ENCODE measurements at regions of chr17 and their contacts with region 1.

Region 1: DNA sequence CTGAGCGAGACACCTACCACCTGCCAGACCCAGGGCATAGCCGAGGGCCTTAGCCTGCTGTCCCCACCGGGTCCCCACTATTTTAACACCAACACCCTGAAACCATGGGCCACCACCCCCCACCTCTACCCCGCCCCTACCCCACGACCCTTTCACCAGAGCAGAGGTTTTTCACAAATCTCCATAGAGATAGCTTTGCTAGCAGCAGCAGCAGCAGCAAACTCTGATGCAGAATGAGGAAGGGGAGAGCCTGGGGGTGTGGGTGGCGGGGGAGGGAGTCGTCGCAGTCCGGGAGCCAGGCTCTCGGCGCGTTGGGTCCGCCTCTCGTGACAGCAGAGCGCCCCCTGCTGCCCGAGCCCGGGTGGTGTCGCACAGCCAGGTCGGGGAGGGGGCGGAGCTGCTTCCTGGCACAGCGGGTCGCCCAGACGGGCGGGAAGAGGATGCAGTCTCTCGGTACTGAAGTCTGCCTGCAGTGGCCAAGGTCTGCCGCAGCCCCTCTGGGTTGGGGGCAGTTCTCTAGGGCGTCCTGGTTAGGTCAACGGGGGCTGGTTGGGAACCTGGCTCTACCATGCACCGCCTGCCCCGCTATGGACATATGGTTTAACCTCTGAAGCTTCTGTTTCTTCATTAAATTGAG is 38.1 kb upstream of the CCDC182 start:
- DNase-seq: peak; percentile 80
- ATAC-seq: peak; percentile 95
- H3K4me3 Mint-ChIP-seq: no peak overlapping the region
- H3K27ac Mint-ChIP-seq: no peak overlapping the region
- H3K4me1 Mint-ChIP-seq: no peaks in the 10 kb centered on the region
- H3K27me3 Mint-ChIP-seq: peaks cover 38% of the 10 kb centered on the region

Region 2: DNA sequence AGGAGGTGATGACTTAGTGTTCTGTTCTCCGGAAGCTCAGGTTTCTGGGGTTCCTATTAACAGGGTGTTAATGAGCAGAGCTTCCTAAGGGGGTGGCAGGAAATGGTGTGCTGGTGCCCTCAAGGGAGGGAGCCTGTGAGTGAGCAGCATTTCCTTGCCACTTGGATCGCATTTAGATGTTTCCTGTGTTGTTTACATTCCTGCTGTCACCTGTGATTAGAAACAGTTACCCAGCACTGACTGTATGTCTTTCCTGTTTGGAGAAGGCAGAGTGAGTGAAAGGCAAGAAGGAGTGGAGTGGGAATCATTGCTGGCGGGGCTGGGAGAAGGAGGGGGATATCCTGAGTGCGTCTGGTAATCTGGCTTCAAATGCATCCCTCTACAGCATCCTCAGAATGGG is 252.7 kb before region 1 on chr17:
- CTCF ChIA-PET with region 1: no interaction called
- DNase-seq: no peak
- ATAC-seq: peak; percentile 20
- H3K4me3 Mint-ChIP-seq: no peak overlapping the region
- H3K27ac Mint-ChIP-seq: peak overlapping the region; percentile 50
- H3K4me1 Mint-ChIP-seq: peaks cover 18% of the 10 kb centered on the region
- H3K27me3 Mint-ChIP-seq: no peaks in the 10 kb centered on the region

Region 3: GRCh38 chr17:57671667-57672632 is 111.3 kb before region 1 on chr17:
- CTCF ChIA-PET with region 1: interaction called, 14 read pairs
- DNase-seq: peak; percentile 86
- ATAC-seq: peak; percentile 93
- H3K4me3 Mint-ChIP-seq: peak overlapping the region; percentile 50
- H3K27ac Mint-ChIP-seq: peak overlapping the region; percentile 96
- H3K4me1 Mint-ChIP-seq: peaks cover 47% of the 10 kb centered on the region
- H3K27me3 Mint-ChIP-seq: no peaks in the 10 kb centered on the region

Region 4: DNA sequence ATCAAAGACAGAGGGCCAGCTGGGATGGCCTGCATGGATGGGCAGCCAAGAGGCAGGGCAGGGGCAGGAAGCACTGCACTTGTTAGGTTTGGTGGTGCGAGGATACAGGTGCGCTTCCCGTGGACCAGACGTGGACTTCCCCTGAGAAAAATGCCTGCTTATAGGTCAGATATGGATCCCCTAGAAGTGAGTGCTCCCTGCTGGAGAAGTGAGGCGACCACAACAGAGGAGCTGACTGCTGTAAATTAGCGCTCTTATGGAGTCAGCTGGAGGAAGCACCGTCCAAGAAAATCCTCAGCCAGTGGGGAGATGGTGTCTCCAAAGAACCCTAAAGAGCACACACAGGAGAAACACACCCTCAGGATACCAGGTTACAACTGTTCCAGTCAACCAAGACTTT is 10.4 kb before region 1 on chr17:
- CTCF ChIA-PET with region 1: interaction called, 17 read pairs
- DNase-seq: no peak
- ATAC-seq: no peak
- H3K4me3 Mint-ChIP-seq: no peak overlapping the region
- H3K27ac Mint-ChIP-seq: no peak overlapping the region
- H3K4me1 Mint-ChIP-seq: no peaks in the 10 kb centered on the region
- H3K27me3 Mint-ChIP-seq: peaks cover 73% of the 10 kb centered on the region

Region 5: GRCh38 chr17:57814421-57814820 is 31.2 kb after region 1 on chr17:
- CTCF ChIA-PET with region 1: interaction called, 10 read pairs
- DNase-seq: no peak
- ATAC-seq: no peak
- H3K4me3 Mint-ChIP-seq: no peak overlapping the region
- H3K27ac Mint-ChIP-seq: no peak overlapping the region
- H3K4me1 Mint-ChIP-seq: no peaks in the 10 kb centered on the region
- H3K27me3 Mint-ChIP-seq: peaks cover 72% of the 10 kb centered on the region

Measured in activated CD8-positive, alpha-beta memory T cell treated with anti-CD3 and anti-CD28 coated beads, Interleukin-2, amount 10 ng/mL, durations not matched to agents 7 days and 5 days (primary cell).